Esophagus squamous epithelium (tissue), 5 donors: ENCODE measurements at regions of chr15 and their contacts with region 1.

Region 1: GRCh38 chr15:98000249-98001196 is 40.0 kb downstream of the ARRDC4 start:
- DNase-seq: no peak
- H3K4me3 ChIP-seq: no peak overlapping the region
- H3K27ac ChIP-seq: no peak overlapping the region
- H3K4me1 ChIP-seq: peaks cover 3 to 44% (median 9%) of the 10 kb centered on the region in 3 donors
- H3K27me3 ChIP-seq: no peaks in the 10 kb centered on the region
- CTCF ChIP-seq: no peak
- POLR2A ChIP-seq: no peak

Region 2: GRCh38 chr15:98076021-98076816 is 75.7 kb after region 1 on chr15:
- intact Hi-C with region 1: loop called (anchors 5 kb)
- DNase-seq: no peak
- H3K4me3 ChIP-seq: no peak overlapping the region
- H3K27ac ChIP-seq: peak overlapping the region; percentile 76 to 82 (median 80)
- H3K4me1 ChIP-seq: peaks cover 14 to 26% (median 18%) of the 10 kb centered on the region in 3 donors
- H3K27me3 ChIP-seq: no peaks in the 10 kb centered on the region
- CTCF ChIP-seq: no peak
- POLR2A ChIP-seq: no peak

Region 3: DNA sequence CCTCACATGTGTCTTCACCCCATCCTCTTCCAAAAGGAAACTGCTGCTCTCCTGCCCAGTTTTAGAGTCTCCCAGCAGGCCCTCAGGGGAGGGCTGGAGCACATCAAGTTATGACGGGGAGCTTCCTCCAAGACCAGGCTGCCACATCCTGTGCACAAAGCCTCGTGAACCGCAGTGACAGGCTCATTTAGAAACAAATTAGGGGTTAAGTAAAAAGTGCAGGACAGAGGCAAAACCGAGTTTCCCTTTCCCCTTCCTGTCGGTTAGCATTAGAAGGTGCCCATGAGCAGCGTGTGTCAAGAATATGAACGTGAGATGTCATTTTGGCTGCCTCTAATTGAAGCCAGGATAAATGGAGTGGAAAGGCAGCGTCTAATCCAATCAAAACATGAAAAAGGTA is 159.7 kb after region 1 on chr15:
- intact Hi-C with region 1: no loop called
- DNase-seq: no peak
- H3K4me3 ChIP-seq: no peak overlapping the region
- H3K27ac ChIP-seq: no peak overlapping the region
- H3K4me1 ChIP-seq: no peaks in the 10 kb centered on the region
- H3K27me3 ChIP-seq: peaks cover 0 to 3% (median 0%) of the 10 kb centered on the region in 4 donors
- CTCF ChIP-seq: no peak
- POLR2A ChIP-seq: no peak